A673 (cell line): ENCODE measurements at regions of chr7 and their contacts with region 1.

Region 1: GRCh38 chr7:69825113-69825616 is 226.9 kb downstream of the AUTS2 start:
- DNase-seq: peak; percentile 74
- H3K4me3 ChIP-seq: peak overlapping the region; percentile 50
- H3K27ac ChIP-seq: peak overlapping the region; percentile 46
- H3K4me1 ChIP-seq: peaks cover 52% of the 10 kb centered on the region
- H3K27me3 ChIP-seq: no peaks in the 10 kb centered on the region
- CTCF ChIP-seq: peak; percentile 37; the same call in 1 of the 2 replicates

Region 2: GRCh38 chr7:69002416-69002815 is 822.7 kb before region 1 on chr7:
- CTCF ChIA-PET with region 1: no interaction called
- POLR2A ChIA-PET with region 1: no interaction called
- intact Hi-C with region 1: no loop called
- DNase-seq: no peak
- H3K4me3 ChIP-seq: no peak overlapping the region
- H3K27ac ChIP-seq: no peak overlapping the region
- H3K4me1 ChIP-seq: no peaks in the 10 kb centered on the region
- H3K27me3 ChIP-seq: no peaks in the 10 kb centered on the region
- CTCF ChIP-seq: no peak

Region 3: DNA sequence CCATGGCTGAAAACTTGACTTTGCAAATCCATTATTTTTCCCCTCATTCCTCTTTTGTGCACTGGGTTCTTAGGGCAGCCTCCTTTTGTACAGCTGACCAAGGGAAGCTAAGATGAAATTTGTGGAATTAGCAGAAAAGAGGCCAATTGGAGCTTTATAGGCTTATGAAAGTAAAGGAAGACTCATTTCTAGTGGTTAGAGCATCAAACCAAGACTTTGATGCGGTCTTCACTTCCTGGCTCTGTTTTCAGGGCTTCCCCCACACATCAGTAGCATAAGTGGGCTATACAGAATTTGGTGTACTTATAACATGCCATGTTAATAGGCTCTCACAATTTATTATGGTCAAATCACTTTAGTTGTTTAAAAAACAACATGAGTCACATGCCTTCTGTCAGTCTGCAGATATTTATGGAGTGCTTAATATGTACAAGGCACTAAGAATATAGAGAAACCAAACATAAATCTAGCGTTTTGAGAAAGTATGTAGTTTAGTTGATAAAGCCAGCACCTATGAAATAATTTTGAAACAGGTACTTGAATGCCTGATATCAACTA is 221.1 kb before region 1 on chr7:
- CTCF ChIA-PET with region 1: no interaction called
- POLR2A ChIA-PET with region 1: no interaction called
- intact Hi-C with region 1: no loop called
- DNase-seq: no peak
- H3K4me3 ChIP-seq: no peak overlapping the region
- H3K27ac ChIP-seq: no peak overlapping the region
- H3K4me1 ChIP-seq: peaks cover 15% of the 10 kb centered on the region
- H3K27me3 ChIP-seq: no peaks in the 10 kb centered on the region
- CTCF ChIP-seq: no peak

Region 4: GRCh38 chr7:69684369-69685292 is 140.5 kb before region 1 on chr7:
- CTCF ChIA-PET with region 1: no interaction called
- POLR2A ChIA-PET with region 1: no interaction called
- intact Hi-C with region 1: loop called (anchors 5 kb)
- DNase-seq: peak; percentile 33
- H3K4me3 ChIP-seq: peak overlapping the region; percentile 4
- H3K27ac ChIP-seq: peak overlapping the region; percentile 28
- H3K4me1 ChIP-seq: peaks cover 41% of the 10 kb centered on the region
- H3K27me3 ChIP-seq: no peaks in the 10 kb centered on the region
- CTCF ChIP-seq: no peak

Region 5: DNA sequence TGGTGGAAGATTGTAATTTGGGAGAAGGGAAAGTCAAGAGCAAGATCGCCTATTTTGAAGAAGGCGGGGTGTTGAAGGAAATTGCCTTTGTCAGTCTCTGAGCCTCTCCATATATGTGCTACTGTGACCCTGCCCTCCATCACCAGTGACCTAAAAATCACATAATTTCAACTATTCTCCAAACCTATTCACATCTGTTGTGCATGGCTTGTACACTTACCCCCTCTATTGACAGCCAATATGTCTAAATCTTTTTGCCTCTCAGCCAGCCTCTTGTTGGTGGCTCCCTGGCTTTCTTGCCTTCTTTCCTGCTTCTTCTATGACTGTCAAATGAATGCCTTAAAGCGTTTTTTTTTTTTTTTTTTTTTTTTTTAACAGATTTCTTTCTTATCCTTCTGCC is 68.7 kb after region 1 on chr7:
- CTCF ChIA-PET with region 1: interaction called, 6 read pairs
- POLR2A ChIA-PET with region 1: no interaction called
- intact Hi-C with region 1: loop called (anchors 5 kb)
- DNase-seq: peak; percentile 65
- H3K4me3 ChIP-seq: no peak overlapping the region
- H3K27ac ChIP-seq: no peak overlapping the region
- H3K4me1 ChIP-seq: peaks cover 20% of the 10 kb centered on the region
- H3K27me3 ChIP-seq: no peaks in the 10 kb centered on the region
- CTCF ChIP-seq: peak; percentile 62

Region 6: GRCh38 chr7:70006261-70006920 is 181.2 kb after region 1 on chr7:
- CTCF ChIA-PET with region 1: no interaction called
- POLR2A ChIA-PET with region 1: no interaction called
- intact Hi-C with region 1: no loop called
- DNase-seq: no peak
- H3K4me3 ChIP-seq: no peak overlapping the region
- H3K27ac ChIP-seq: no peak overlapping the region
- H3K4me1 ChIP-seq: no peaks in the 10 kb centered on the region
- H3K27me3 ChIP-seq: no peaks in the 10 kb centered on the region
- CTCF ChIP-seq: no peak